H1 (cell line): ENCODE measurements at regions of chr18 and their contacts with region 1.

Region 1: DNA sequence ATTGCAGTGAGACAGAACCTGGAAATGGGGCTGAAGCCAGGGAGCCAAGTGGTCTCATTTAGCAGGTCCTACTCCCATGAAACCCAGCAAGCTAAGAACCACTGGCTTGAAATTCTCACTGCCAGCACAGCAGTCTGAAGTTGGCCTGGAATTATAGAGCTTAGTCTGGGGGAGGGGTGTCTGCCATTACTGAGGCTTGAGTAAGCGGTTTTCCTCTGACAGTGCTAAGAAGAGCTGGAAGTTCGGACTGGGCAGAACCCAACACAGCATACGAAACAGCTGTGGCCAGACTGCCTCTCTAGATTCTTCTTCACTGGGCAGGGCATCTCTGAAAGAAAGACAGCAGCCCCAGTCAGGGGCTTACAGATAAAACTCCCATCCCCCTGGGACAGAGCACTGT is 305.7 kb upstream of the SETBP1 start:
- DNase-seq: no peak
- H3K4me3 ChIP-seq: no peak overlapping the region
- H3K27ac ChIP-seq: no peak overlapping the region
- H3K4me1 ChIP-seq: no peaks in the 10 kb centered on the region
- H3K27me3 ChIP-seq: no peaks in the 10 kb centered on the region
- CTCF ChIP-seq: no peak
- EP300 ChIP-seq: no peak
- POLR2A ChIP-seq: no peak
- RAD21 ChIP-seq: no peak

Region 2: GRCh38 chr18:44386401-44386800 is 11.4 kb after region 1 on chr18:
- CTCF ChIA-PET with region 1: interaction called, 10 read pairs
- POLR2A ChIA-PET with region 1: no interaction called
- DNase-seq: no peak
- H3K4me3 ChIP-seq: no peak overlapping the region
- H3K27ac ChIP-seq: no peak overlapping the region
- H3K4me1 ChIP-seq: no peaks in the 10 kb centered on the region
- H3K27me3 ChIP-seq: no peaks in the 10 kb centered on the region
- CTCF ChIP-seq: no peak
- EP300 ChIP-seq: no peak
- POLR2A ChIP-seq: no peak
- RAD21 ChIP-seq: no peak